Left ventricle myocardium superior (tissue), 1 donor: ENCODE measurements at regions of chr2 and their contacts with region 1.

Region 1: GRCh38 chr2:38377050-38377828 is at the start of gene ATL2:
- DNase-seq: peak; percentile 98
- ATAC-seq: peak; percentile 94
- total RNA-seq, gene ATL2: 28.2 TPM

Region 2: GRCh38 chr2:38323623-38324022 is 53.6 kb before region 1 on chr2:
- intact Hi-C with region 1: loop called (anchors 5 kb)
- DNase-seq: no peak
- ATAC-seq: no peak

Region 3: DNA sequence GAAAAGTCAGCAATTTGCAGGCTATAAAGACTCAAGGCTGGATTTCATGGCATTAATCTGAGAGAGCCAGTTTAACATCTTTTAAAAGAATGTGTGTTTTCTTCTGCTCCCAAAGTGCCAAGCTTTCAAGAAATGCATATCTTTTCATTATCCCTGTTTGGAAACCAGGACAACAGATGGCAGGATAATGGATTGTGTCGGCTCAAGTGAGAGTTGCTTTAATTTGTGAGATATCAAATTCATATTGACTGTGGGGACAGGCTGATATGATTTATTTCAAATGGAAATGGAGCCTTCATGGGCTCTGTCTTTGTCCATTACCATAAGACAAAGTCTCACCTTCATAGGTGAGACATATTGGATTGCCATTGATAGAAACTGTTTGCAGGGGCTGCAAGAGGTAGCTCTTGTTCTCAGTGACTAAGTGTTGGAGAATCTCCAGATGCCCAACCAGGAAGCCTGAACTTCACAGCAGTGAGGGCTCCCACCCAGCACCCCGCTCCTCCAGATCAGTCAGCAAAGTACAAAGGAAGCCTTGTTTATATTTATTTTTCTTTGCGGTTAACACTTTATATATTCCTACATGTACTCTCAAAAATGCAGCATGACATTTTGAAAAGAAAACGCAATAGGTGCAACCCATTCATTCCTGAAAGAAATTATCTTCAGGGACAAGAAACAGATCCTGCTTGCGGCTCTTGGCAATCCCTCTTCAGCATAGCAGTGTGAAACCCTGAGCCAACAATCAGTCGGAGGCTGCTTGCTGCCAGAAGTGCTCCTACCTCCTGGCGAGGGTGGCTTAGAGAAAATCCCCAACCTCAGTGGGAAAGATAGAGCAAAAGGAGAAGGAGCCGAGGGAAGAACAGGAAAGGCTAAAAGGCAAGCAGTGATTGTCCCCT is 65.7 kb after region 1 on chr2:
- intact Hi-C with region 1: loop called (anchors 10 kb)
- DNase-seq: peak; percentile 37
- ATAC-seq: peak; percentile 75

Region 4: DNA sequence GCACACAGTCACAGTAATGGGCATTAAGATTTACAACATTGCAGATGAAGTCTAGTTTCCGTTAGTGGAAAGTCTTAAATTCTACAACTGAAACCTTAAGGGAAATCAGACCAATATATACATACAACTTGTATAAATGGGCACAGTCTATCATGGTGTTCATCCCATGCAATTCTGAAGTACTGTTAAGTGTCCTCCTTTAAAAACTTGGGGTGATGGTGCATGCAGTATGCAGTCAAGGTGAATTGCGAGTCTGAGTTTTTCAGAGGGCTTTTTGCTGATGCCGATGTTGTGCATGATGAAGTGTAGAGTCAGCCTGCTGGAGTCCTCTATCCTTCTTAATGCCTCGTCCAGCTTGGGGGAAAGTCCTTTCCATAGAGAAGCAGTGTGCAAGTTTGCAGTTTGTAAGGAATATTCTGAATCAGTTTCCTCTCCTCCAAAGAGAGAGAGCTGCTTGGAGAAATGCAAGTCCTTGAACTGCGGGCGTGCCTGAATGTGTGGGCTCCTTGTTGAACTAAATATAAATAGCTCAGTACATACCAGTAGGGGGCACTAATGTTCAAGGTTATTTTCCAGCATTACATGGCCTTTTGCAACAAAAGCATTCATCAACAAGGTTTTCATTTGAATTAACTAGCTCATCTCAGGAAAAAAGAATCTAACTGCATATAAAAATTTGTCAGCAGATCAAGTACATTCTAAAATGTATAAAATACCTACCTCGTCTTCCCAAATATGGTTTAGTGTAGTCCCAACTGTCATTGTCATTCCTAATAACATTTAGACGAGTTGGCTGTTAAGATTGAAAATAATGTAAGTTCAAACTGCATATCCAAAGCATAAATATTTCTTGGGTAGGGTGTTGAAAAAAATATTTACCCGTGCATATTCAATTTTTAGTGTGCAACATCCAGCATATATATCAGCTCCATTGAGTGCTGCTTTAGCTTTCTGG is 204.2 kb after region 1 on chr2:
- intact Hi-C with region 1: no loop called
- DNase-seq: peak; percentile 39
- ATAC-seq: peak; percentile 82